Activated T-helper 1 cell treated with anti-CD3 and anti-CD28 coated beads, Interleukin-12 subunit alpha, Interleukin-12 subunit beta, Interleukin-2, Interleukin-4 antibody, amounts not matched to agents 30 ng/mL and 10 ng/mL and 1 ng/mL, durations not matched to agents 14 hours and 24 hours and 36 hours (primary cell): ENCODE measurements at regions of chr1 and their contacts with region 1.

Region 1: GRCh38 chr1:160795951-160796383 is at the start of gene LY9:
- DNase-seq: peak; percentile 76
- H3K4me3 Mint-ChIP-seq: peak within 1 kb of the TSS; percentile 73
- H3K27ac Mint-ChIP-seq: peak within 1 kb of the TSS; percentile 77
- H3K4me1 Mint-ChIP-seq: peaks cover 67% of the 10 kb centered on the region
- H3K27me3 Mint-ChIP-seq: peaks cover 14% of the 10 kb centered on the region
- total RNA-seq, gene LY9: 0.49 and 0.71 TPM in 2 replicates

Region 2: DNA sequence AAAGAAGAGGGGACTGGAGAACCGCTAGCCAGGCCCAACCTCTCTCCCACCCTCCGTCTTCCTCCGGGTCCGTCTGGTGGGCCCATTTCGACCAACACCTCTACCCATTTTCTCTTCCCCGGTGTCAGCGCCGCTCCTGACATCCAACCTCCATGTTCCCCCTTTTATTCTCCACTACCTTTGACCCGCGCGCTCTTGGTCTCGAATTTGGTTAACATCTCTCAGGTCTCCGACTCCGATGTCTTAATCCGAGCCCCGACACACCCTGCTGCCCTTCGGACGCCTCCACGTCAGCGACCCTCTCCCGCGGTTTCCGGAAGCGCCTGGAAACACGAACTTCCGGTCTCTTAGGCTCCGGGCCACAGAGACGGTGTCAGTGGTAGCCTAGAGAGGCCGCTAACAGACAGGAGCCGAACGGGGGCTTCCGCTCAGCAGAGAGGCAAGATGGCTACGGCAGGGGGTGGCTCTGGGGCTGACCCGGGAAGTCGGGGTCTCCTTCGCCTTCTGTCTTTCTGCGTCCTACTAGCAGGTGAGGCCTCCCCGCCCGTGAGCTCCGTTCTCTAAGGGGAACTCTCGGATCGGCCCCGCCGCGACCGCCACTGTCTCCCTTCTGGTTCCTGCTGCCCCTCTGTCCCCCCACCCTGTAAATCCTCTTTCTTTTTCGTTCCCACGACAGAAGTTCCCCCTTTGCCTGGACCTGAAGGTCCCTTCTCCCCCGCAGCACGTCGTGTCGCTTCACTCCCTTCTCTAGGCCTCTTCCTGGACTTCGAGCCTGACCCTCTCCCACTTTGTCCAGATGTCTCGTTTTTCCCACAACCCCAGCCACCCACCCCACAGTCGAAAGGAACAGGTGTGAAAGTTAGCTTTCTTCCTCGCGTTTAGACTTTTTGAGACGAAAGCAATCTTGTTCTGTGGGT is 452.8 kb before region 1 on chr1 and contains the starts of genes COPA and NCSTN:
- intact Hi-C with region 1: loop called (anchors 10 kb)
- DNase-seq: peak; percentile 88
- H3K4me3 Mint-ChIP-seq: peak within 1 kb of the TSS; percentile 100
- H3K27ac Mint-ChIP-seq: peak within 1 kb of the TSS; percentile 99
- H3K4me1 Mint-ChIP-seq: peaks cover 61% of the 10 kb centered on the region
- H3K27me3 Mint-ChIP-seq: no peaks in the 10 kb centered on the region
- total RNA-seq, gene COPA: 123 and 126 TPM in 2 replicates
- total RNA-seq, gene NCSTN: 74.8 and 81.6 TPM in 2 replicates

Region 3: DNA sequence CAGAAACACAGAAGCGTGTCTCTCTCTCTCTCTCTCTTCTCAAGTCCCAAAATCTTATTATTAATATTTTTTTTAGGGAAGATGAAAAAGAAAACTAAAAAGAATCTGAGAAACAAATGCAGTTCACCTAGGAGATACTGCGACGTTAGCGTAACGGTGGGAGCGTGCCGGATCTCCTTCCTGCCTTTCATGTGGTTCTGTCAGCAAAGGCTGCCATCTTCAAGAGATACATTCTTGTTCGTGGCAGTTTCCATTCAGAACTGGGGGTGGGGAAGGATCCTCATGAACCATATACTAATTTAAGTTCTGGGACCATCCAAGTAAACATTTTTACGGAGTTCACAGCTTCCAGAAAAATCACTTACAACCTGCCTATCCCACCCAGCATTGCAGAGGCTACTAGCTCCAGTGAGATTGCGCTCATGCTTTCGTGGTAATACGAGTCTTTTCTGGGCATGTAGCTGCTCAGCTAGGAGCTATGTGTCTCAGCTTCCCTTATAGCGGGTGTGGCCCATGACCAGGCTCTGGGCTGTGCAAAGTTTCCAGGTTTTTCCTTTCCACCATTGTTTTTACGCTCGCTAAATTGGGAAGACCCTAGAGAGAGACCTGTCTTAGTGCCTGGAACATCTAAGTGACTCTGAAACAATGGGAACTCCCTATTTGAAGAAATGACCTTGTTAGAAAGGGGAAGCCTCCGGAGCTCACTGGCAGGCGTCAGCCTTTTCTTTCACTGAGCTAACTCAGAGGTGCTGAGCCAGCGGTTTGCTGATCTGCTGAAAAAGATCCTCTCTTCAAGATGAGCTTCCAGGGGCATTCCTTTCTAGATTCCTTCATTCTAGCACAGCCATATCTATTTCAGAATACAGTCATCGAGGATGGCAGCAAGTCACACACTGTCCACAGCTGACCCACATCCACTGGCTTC is 166.4 kb before region 1 on chr1:
- intact Hi-C with region 1: loop called (anchors 2 kb)
- DNase-seq: peak; percentile 76
- H3K4me3 Mint-ChIP-seq: peak overlapping the region; percentile 69
- H3K27ac Mint-ChIP-seq: peak overlapping the region; percentile 99
- H3K4me1 Mint-ChIP-seq: peaks cover 98% of the 10 kb centered on the region
- H3K27me3 Mint-ChIP-seq: no peaks in the 10 kb centered on the region

Region 4: GRCh38 chr1:160739098-160739511 is 56.9 kb before region 1 on chr1 and contains the start of gene SLAMF7:
- intact Hi-C with region 1: loop called (anchors 2 kb)
- DNase-seq: no peak
- H3K4me3 Mint-ChIP-seq: peak within 1 kb of the TSS; percentile 90
- H3K27ac Mint-ChIP-seq: peak within 1 kb of the TSS; percentile 95
- H3K4me1 Mint-ChIP-seq: peaks cover 68% of the 10 kb centered on the region
- H3K27me3 Mint-ChIP-seq: no peaks in the 10 kb centered on the region
- total RNA-seq, gene SLAMF7: 43.7 and 53.6 TPM in 2 replicates

Region 5: DNA sequence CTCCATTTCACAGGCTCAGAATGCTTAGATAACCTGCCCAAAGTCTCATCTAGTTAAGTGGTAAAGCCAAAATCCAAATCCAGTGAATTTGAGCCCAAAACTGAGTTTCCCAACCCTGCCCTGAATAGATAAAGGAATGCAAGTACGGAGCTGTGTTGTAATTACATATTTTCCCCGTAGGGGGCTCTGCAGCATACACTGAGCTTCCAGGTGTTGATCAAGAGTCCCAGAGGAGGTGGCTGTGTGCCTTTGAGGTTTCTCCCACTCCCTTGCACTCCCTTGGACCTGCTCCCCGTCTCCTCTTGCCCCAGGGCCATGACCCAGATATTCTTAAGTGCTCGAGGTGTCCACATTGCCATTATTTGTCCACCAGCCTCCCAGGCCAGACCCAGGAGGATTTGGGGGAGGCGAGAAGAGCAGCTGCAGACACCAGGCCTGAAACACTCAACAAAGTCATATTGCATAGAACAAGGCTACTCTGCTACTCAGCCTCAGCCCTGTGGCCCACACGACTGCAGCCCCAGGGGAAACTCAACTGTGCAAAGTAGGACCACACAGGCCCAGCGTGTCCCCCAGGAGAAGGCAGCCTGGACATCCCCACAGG is 18.4 kb before region 1 on chr1:
- intact Hi-C with region 1: loop called (anchors 1 kb)
- DNase-seq: peak; percentile 32
- H3K4me3 Mint-ChIP-seq: no peak overlapping the region
- H3K27ac Mint-ChIP-seq: peak overlapping the region; percentile 48
- H3K4me1 Mint-ChIP-seq: peaks cover 54% of the 10 kb centered on the region
- H3K27me3 Mint-ChIP-seq: no peaks in the 10 kb centered on the region